PC-9 (cell line): ENCODE measurements at regions of chr13 and their contacts with region 1.

Region 1: GRCh38 chr13:36761808-36762586 is 57.0 kb upstream of the RFXAP start:
- DNase-seq: peak; percentile 61 to 89
- H3K4me3 ChIP-seq: no peak overlapping the region
- H3K27ac ChIP-seq: peak overlapping the region; percentile 74
- H3K4me1 ChIP-seq: peaks cover 41% of the 10 kb centered on the region
- H3K27me3 ChIP-seq: no peaks in the 10 kb centered on the region
- CTCF ChIP-seq: no peak

Region 2: GRCh38 chr13:36778083-36778671 is 16.2 kb after region 1 on chr13:
- CTCF ChIA-PET with region 1: no interaction called
- POLR2A ChIA-PET with region 1: no interaction called
- intact Hi-C with region 1: loop called (anchors 1 kb)
- DNase-seq: peak in 1 of 2 experiments; percentile 24
- H3K4me3 ChIP-seq: no peak overlapping the region
- H3K27ac ChIP-seq: no peak overlapping the region
- H3K4me1 ChIP-seq: no peaks in the 10 kb centered on the region
- H3K27me3 ChIP-seq: no peaks in the 10 kb centered on the region
- CTCF ChIP-seq: no peak

Region 3: DNA sequence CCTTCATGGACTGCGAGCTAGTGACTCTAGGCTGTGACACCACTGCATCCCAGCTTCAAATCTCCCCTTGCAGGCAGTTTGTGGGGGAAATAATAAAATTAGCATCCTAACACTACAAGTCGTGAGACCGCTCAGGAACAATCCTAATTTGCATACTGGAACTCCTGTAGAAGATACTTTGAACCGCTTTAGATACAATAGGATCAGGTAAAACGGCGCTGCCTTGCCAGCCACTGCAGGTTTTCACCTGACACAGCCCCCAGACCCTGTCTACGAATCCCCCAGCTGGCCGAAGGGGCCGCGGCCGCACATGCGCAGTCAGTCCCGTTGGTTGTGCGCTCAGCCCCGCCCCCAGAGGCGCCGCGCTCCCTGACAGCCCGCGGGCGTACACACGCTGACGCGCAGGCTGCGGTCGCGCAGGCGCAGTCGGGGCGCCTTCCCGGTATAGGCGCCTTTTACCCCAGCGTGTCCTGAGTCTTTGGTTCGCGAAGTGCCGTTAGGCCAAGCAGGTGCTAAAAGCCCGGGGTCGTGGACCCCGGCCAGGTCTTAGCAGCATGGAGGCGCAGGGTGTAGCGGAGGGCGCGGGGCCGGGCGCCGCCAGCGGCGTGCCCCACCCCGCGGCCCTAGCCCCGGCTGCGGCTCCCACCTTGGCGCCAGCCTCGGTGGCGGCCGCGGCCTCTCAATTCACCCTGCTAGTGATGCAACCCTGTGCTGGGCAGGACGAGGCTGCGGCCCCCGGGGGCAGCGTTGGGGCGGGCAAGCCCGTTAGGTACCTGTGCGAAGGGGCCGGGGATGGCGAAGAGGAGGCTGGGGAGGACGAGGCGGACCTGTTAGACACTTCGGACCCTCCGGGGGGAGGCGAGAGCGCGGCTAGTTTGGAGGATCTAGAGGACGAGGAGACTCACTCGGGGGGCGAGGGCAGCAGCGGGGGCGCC is 57.1 kb after region 1 on chr13 and contains the start of gene RFXAP:
- CTCF ChIA-PET with region 1: no interaction called
- POLR2A ChIA-PET with region 1: no interaction called
- intact Hi-C with region 1: loop called (anchors 1 kb)
- DNase-seq: peak; percentile 61 to 80
- H3K4me3 ChIP-seq: peak within 1 kb of the TSS; percentile 90
- H3K27ac ChIP-seq: no peak within 1 kb of the TSS
- H3K4me1 ChIP-seq: peaks cover 16% of the 10 kb centered on the region
- H3K27me3 ChIP-seq: no peaks in the 10 kb centered on the region
- CTCF ChIP-seq: no peak
- total RNA-seq, gene RFXAP: 3.9 and 5.6 TPM in 2 replicates